ENCODE measurements at regions of chr1 and their contacts with region 1.

Region 1: GRCh38 chr1:212035123-212035834 is at the starts of genes DTL and INTS7:
- DNase-seq: peak; percentile 100
- ATAC-seq: peak; percentile 90
- H3K4me3 Mint-ChIP-seq: peak within 1 kb of the TSS; percentile 93
- H3K27ac Mint-ChIP-seq: peak within 1 kb of the TSS; percentile 96
- H3K4me1 Mint-ChIP-seq: peaks cover 60% of the 10 kb centered on the region
- H3K27me3 Mint-ChIP-seq: no peaks in the 10 kb centered on the region
- total RNA-seq, gene DTL: 86.2 to 97.2 TPM
- total RNA-seq, gene INTS7: 31.7 to 32.8 TPM

Region 2: DNA sequence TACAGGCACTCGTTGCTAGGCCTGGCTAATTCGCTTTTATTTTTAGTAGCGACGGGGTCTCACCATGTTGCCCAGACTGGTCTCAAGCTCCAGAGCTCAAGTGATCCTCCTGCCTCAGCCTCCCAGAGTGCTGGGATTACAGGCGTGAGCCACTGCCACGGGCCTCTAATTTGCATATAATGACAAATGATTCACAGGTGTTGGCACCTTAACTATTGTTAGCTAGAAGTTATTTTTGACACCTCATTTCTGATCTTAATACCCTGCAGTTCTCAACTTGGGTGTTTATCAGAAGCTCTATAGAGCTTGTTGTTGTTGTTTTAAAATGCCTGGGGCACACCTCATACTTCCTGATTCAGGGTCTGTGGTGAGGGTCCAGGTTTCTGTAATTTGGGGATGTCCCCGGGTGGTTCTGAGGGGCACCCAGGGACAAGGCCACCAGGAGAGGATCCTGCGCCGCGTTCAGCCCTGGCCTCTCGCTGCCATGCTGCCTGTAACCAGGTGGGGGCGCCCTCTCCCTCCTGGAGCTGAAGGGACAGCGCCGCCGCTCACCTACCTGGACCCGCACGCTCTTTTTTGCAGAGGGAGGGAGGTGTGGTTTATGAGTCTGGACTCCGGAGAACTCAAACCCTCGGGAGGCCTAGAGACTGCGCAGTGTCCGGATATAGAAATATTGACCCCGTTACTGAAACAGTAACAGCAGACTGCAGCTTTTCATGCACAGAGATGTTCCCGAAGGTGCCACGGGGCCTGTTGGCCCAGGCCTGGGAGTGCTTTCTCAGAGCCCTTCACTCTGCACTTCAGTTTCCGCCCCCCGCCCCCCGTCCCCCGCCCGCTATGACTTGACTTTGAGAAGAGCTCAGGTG is 336.9 kb before region 1 on chr1:
- CTCF ChIA-PET with region 1: interaction called, 65 read pairs
- DNase-seq: peak; percentile 89
- ATAC-seq: peak; percentile 93
- H3K4me3 Mint-ChIP-seq: peak overlapping the region; percentile 45
- H3K27ac Mint-ChIP-seq: no peak overlapping the region
- H3K4me1 Mint-ChIP-seq: peaks cover 48% of the 10 kb centered on the region
- H3K27me3 Mint-ChIP-seq: peaks cover 21% of the 10 kb centered on the region

Region 3: GRCh38 chr1:211761400-211761799 is 273.9 kb before region 1 on chr1:
- CTCF ChIA-PET with region 1: no interaction called
- DNase-seq: no peak
- ATAC-seq: no peak
- H3K4me3 Mint-ChIP-seq: no peak overlapping the region
- H3K27ac Mint-ChIP-seq: no peak overlapping the region
- H3K4me1 Mint-ChIP-seq: no peaks in the 10 kb centered on the region
- H3K27me3 Mint-ChIP-seq: no peaks in the 10 kb centered on the region

Region 4: GRCh38 chr1:211947396-211948295 is 87.6 kb before region 1 on chr1:
- CTCF ChIA-PET with region 1: no interaction called
- DNase-seq: no peak
- ATAC-seq: no peak
- H3K4me3 Mint-ChIP-seq: no peak overlapping the region
- H3K27ac Mint-ChIP-seq: no peak overlapping the region
- H3K4me1 Mint-ChIP-seq: peaks cover 11% of the 10 kb centered on the region
- H3K27me3 Mint-ChIP-seq: no peaks in the 10 kb centered on the region

Region 5: GRCh38 chr1:212045981-212046380 is 10.7 kb after region 1 on chr1:
- CTCF ChIA-PET with region 1: interaction called, 31 read pairs
- DNase-seq: no peak
- ATAC-seq: no peak
- H3K4me3 Mint-ChIP-seq: no peak overlapping the region
- H3K27ac Mint-ChIP-seq: no peak overlapping the region
- H3K4me1 Mint-ChIP-seq: peaks cover 17% of the 10 kb centered on the region
- H3K27me3 Mint-ChIP-seq: no peaks in the 10 kb centered on the region

Region 6: DNA sequence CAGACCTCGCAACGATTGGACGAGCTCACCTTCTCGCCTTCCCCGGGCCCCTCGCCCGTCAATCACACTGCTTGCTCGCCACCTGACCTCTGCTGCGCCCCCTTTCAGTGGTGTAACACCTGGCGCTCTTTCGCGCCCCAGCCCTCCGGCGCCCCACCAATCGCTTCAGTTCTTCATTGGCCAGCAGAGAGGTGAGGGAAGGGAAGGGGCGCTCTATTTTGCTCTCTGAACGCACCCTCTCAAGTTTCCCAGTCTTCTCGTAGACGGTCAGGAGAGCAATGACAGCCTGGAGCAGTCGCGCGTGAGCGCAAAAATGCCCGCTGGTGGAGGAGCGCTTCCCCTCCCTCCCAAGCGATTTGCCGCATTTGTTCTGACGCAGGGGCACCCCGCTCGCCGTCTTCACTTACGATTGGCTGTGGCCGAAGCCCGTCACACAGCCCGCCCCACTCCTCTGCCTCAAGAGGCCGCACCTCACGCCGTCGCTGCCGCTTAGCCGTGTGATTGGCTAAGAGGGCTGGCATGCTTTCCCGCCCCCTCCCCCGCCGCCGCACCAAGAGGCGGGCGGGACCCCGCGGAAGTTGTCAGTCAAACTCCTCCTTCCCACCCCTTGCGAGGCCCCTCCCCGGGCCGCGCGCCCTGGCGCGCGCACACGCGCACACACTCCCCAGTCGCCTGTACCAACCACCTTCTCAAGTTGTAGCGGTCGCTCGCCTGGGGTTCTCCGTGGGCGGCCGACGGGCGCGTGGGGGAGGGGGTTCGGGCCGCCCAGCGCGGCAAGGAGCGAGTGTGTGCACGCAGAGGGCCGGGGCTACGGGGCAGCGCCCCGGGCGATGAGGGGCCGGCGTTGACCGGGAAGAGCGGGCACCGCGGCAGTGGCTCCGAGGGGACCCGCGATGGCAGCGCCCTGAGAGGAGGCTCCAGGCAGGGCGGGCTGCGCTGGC is 249.7 kb after region 1 on chr1 and contains the start of gene PPP2R5A:
- CTCF ChIA-PET with region 1: interaction called, 25 read pairs
- DNase-seq: peak; percentile 99
- ATAC-seq: peak; percentile 91
- H3K4me3 Mint-ChIP-seq: peak within 1 kb of the TSS; percentile 90
- H3K27ac Mint-ChIP-seq: peak within 1 kb of the TSS; percentile 96
- H3K4me1 Mint-ChIP-seq: peaks cover 35% of the 10 kb centered on the region
- H3K27me3 Mint-ChIP-seq: no peaks in the 10 kb centered on the region
- total RNA-seq, gene PPP2R5A: 42.7 to 44.0 TPM

Region 7: DNA sequence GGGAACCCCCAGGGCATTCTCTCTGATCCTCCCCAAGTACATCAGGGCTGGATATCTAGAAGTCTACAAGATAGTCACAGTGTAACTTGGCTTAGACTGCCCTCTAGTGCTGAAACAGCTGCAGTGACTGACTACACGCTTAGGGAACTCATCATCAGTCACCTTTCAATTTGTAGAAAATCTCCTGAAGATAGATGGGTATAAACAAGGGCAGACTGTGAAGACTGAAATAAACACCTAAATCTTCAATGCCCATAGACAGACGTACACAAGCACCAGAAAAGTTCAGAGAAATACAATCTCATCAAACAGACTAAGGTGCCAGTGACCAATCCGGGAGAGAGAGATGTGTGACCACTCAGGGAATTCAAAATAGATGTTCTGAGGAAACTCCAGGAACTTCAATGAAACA is 332.8 kb after region 1 on chr1:
- CTCF ChIA-PET with region 1: interaction called, 12 read pairs
- DNase-seq: peak; percentile 75
- ATAC-seq: peak; percentile 96
- H3K4me3 Mint-ChIP-seq: no peak overlapping the region
- H3K27ac Mint-ChIP-seq: no peak overlapping the region
- H3K4me1 Mint-ChIP-seq: peaks cover 1% of the 10 kb centered on the region
- H3K27me3 Mint-ChIP-seq: no peaks in the 10 kb centered on the region

Region 8: DNA sequence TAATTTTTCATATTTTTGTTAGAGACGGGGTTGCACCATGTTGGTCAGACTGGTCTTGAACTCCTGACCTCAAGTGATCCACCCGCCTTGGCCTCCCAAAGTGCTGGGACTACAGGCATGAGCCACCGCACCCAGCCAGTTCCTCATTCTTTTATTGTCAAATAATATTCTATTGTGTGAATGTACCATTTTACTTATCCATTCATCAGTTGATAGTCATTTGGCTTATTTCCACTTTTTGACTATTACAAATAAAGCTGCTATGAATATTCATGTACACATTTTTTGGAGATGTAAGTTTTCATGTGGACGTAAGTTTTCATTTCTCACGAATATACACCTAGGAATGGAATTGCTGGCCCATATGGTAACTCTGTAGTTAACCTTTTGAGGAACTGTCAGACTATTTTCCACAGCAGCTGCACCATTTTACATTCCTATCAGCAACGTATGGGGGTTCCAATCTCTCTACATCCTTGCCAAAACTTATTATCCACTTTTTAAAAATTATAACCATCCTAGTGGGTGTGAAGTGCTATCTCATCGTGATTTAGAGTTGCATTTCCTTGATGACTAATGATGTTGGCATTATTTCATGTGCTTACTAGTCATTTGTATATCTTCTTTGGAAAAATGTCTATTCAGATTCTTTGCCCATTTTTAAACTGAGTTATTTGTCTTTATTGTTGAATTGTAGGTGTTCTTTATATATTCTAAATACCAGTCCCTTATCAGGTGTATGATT is 366.7 kb after region 1 on chr1:
- CTCF ChIA-PET with region 1: no interaction called
- DNase-seq: no peak
- ATAC-seq: no peak
- H3K4me3 Mint-ChIP-seq: no peak overlapping the region
- H3K27ac Mint-ChIP-seq: no peak overlapping the region
- H3K4me1 Mint-ChIP-seq: peaks cover 2% of the 10 kb centered on the region
- H3K27me3 Mint-ChIP-seq: no peaks in the 10 kb centered on the region